Ascending aorta (tissue), 2 donors: ENCODE measurements at regions of chr20 and their contacts with region 1.

Region 1: DNA sequence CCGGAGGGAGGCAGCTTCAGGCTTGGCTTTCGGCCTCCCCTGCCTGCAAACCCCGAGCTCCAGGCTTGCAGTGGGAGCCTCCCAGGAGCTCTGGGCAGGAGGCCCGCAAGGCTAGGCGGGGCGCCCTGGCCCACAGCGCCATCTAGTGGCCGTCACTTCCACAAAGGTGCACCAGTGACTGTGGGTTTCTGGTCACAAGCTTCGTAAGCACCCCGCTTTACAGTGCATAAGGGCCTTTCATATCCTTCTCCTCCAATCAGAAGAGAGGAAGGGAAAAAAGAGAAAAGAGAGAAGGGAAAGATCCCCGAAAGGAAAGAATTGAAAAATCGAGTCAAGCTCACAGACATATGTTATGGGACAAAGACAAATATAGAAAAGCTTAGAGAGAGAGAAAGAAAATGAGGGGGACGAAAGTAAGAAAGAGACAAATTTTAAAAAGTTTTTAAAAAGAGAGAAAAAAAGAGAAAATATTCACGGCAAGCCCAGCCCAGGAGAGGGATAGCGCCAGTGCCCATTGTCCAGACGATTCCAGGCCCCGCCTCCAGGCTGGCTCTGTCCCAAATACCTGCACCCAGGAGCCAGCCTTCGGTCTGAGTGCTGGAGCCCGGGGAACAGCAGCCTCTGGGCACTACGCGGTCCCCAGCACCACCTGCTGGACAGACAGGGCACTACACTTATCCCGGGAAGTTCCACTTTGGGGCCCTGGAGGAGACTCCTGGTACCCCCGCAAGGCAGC is 207.1 kb downstream of the PREX1 start:
- DNase-seq: peak in 1 of 2 donors; percentile 87
- H3K4me3 ChIP-seq: peak overlapping the region in 1 of 2 donors; percentile 59
- H3K27ac ChIP-seq: no peak overlapping the region
- H3K4me1 ChIP-seq: peaks cover 5 to 12% of the 10 kb centered on the region in 2 donors
- H3K27me3 ChIP-seq: no peaks in the 10 kb centered on the region
- CTCF ChIP-seq: peak; percentile 86 to 93 (median 93)

Region 2: GRCh38 chr20:47663333-47664067 is 957.2 kb before region 1 on chr20:
- intact Hi-C with region 1: loop called (anchors 1 kb)
- DNase-seq: peak in 1 of 2 donors; percentile 86
- H3K4me3 ChIP-seq: no peak overlapping the region
- H3K27ac ChIP-seq: no peak overlapping the region
- H3K4me1 ChIP-seq: peaks cover 0 to 9% of the 10 kb centered on the region in 2 donors
- H3K27me3 ChIP-seq: no peaks in the 10 kb centered on the region
- CTCF ChIP-seq: peak; percentile 87 to 97 (median 94)

Region 3: GRCh38 chr20:47677635-47678453 is 942.8 kb before region 1 on chr20:
- intact Hi-C with region 1: loop called (anchors 1 kb)
- DNase-seq: no peak
- H3K4me3 ChIP-seq: no peak overlapping the region
- H3K27ac ChIP-seq: no peak overlapping the region
- H3K4me1 ChIP-seq: no peaks in the 10 kb centered on the region
- H3K27me3 ChIP-seq: no peaks in the 10 kb centered on the region
- CTCF ChIP-seq: peak; percentile 55 to 74 (median 66)

Region 4: GRCh38 chr20:47725248-47725973 is 895.3 kb before region 1 on chr20:
- intact Hi-C with region 1: loop called (anchors 2 kb)
- DNase-seq: peak in 1 of 2 donors; percentile 82
- H3K4me3 ChIP-seq: no peak overlapping the region
- H3K27ac ChIP-seq: no peak overlapping the region
- H3K4me1 ChIP-seq: peaks cover 0 to 8% of the 10 kb centered on the region in 2 donors
- H3K27me3 ChIP-seq: no peaks in the 10 kb centered on the region
- CTCF ChIP-seq: peak; percentile 67 to 88 (median 84)

Region 5: GRCh38 chr20:48295445-48295963 is 325.2 kb before region 1 on chr20:
- intact Hi-C with region 1: loop called (anchors 5 kb)
- DNase-seq: no peak
- H3K4me3 ChIP-seq: no peak overlapping the region
- H3K27ac ChIP-seq: peak overlapping the region; percentile 45 to 75
- H3K4me1 ChIP-seq: peaks cover 4 to 22% of the 10 kb centered on the region in 2 donors
- H3K27me3 ChIP-seq: no peaks in the 10 kb centered on the region
- CTCF ChIP-seq: peak in 2 of 3 experiments; percentile 24 to 28

Region 6: DNA sequence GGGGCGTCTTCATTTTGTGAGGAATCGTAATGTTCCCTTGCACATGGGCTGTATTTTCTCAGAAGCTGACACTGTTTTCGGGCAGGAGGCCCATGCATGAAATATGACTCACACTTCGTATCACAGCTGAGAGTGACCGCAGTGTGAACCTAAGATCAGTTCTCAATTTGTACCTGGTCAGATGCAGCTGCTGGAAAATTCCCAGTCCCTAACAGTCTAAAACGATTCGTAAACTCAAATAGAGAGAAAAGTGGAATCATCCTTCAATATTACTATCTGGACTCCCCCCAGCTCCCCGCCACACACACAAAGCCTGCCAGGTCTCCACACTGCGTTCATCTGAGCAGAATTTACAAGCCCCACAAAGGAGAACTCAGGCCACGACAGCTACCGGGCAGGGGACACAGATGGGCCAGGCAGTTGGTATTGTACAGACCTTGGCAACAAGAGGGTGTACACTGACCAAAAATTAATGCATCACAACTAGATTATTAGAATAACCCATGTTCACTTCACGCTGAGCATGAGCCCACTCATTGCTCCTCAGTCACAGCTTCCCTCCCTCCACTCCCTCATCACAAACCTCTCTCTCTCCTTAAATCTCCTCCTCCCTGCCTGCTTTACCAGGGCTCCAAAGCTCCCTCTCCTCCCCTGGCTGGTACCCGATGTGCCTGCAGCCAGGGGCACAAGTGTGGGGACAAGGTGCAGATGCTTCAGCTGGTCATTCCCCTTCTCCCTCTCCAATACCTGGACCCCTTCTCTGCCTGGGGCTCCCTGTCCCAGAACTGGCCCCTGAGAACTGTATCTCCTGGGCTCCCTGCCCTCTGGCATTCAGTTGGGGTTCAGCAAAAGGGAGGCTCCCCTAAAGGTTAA is 281.3 kb before region 1 on chr20:
- intact Hi-C with region 1: no loop called
- DNase-seq: no peak
- H3K4me3 ChIP-seq: no peak overlapping the region
- H3K27ac ChIP-seq: no peak overlapping the region
- H3K4me1 ChIP-seq: peaks cover 0 to 3% of the 10 kb centered on the region in 2 donors
- H3K27me3 ChIP-seq: no peaks in the 10 kb centered on the region
- CTCF ChIP-seq: no peak

Region 7: DNA sequence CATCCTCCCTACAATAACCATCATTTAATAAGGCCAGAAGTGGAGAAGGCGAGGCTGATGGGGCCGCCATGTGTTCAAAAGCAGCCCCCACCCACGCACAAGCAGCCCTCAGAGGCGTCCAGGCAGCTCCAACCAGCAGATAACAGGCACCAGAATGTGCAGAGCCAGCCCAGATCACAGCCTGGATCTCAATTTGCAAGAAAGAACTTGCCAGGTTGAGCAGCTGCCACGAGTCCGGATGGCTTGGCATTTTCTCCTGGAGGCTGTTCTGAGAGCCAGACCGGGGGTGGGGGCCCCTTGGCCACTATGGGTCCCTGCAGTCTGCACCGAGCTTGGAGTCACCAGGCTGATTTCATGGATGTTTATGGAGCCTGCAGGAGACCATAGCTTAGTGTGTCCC is 131.0 kb before region 1 on chr20:
- intact Hi-C with region 1: no loop called
- DNase-seq: peak in 1 of 2 donors; percentile 41
- H3K4me3 ChIP-seq: no peak overlapping the region
- H3K27ac ChIP-seq: no peak overlapping the region
- H3K4me1 ChIP-seq: no peaks in the 10 kb centered on the region
- H3K27me3 ChIP-seq: no peaks in the 10 kb centered on the region
- CTCF ChIP-seq: no peak

Region 8: DNA sequence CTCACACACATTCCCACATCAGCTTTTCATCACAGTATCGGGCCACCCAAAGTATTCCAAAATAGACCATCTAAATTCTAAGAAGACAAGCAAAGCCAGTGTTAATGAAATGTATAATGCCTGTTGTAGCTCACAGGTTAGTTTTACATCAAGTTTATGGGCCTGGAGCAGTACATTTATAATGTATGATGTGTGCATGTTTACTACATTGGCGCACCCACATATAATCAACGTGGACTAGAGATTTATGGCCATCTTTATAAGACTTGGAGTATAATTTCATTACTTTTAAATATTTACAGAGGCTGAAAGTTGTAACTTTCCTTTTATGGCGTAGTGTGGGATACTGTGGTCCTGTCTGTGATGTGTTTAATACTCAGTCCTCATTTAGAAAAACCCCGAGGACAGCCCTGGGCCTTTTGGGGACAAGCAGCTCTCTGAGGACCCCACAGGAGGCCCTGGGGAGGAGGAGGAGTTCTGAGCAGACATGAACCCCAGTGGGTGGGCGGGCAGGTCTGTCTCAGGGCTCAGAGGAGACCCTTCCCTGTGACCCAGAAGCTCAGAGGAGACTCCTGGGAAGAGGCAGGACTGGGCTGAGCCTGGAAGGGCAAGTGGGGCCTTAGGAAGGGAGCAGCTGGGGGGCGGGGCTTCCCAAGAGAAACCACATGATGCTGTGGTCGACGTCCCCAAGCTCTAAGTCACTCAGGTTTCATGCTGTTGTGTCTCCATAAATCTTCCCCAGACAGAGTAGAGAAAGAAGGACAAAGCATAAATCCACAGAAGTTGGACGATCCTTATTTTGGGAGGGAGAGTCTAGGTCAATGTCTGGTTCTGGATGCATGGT is 25.0 kb before region 1 on chr20:
- intact Hi-C with region 1: no loop called
- DNase-seq: peak in 1 of 2 donors; percentile 30
- H3K4me3 ChIP-seq: no peak overlapping the region
- H3K27ac ChIP-seq: no peak overlapping the region
- H3K4me1 ChIP-seq: no peaks in the 10 kb centered on the region
- H3K27me3 ChIP-seq: no peaks in the 10 kb centered on the region
- CTCF ChIP-seq: no peak